ENCODE measurements at regions of chr16 and their contacts with region 1.

Region 1: GRCh38 chr16:66899945-66900710 is 18.6 kb downstream of the CDH16 start:
- DNase-seq: no peak
- ATAC-seq: no peak

Region 2: GRCh38 chr16:66923247-66923731 is 23.2 kb after region 1 on chr16:
- intact Hi-C with region 1: loop called (anchors 1 kb)
- DNase-seq: peak; percentile 63
- ATAC-seq: peak; percentile 17

Region 3: GRCh38 chr16:66935322-66936260 is 35.5 kb after region 1 on chr16 and contains the start of gene CES2:
- intact Hi-C with region 1: loop called (anchors 5 kb)
- DNase-seq: peak; percentile 71
- ATAC-seq: peak; percentile 79
- total RNA-seq, gene CES2: 126 TPM